ENCODE measurements at regions of chr14 and their contacts with region 1.

Region 1: GRCh38 chr14:75514673-75515628 is 7.3 kb upstream of the BATF start:
- DNase-seq: peak; percentile 59 to 70 (median 63)
- H3K4me3 ChIP-seq: peak overlapping the region; percentile 45 to 49
- H3K4me3 Mint-ChIP-seq: peak overlapping the region; percentile 88 to 97 (median 94)
- H3K27ac ChIP-seq: peak overlapping the region; percentile 73
- H3K27ac Mint-ChIP-seq: peak overlapping the region; percentile 87 to 99 (median 97)
- H3K4me1 ChIP-seq: peaks cover 33% of the 10 kb centered on the region
- H3K4me1 Mint-ChIP-seq: peaks cover 22 to 51% (median 33%) of the 10 kb centered on the region in 4 donors
- H3K27me3 ChIP-seq: no peaks in the 10 kb centered on the region
- H3K27me3 Mint-ChIP-seq: no peaks in the 10 kb centered on the region

Region 2: GRCh38 chr14:75531660-75532317 is 16.8 kb after region 1 on chr14:
- CTCF ChIA-PET with region 1: interaction called, 15 read pairs
- POLR2A ChIA-PET with region 1: interaction called, 292 read pairs
- intact Hi-C with region 1: no loop called
- DNase-seq: no peak
- H3K4me3 ChIP-seq: no peak overlapping the region
- H3K4me3 Mint-ChIP-seq: peak overlapping the region in 4 of 8 donors; percentile 33 to 64 (median 44)
- H3K27ac ChIP-seq: peak overlapping the region; percentile 40
- H3K27ac Mint-ChIP-seq: peak overlapping the region; percentile 44 to 93 (median 81)
- H3K4me1 ChIP-seq: peaks cover 72% of the 10 kb centered on the region
- H3K4me1 Mint-ChIP-seq: peaks cover 53 to 73% (median 65%) of the 10 kb centered on the region in 4 donors
- H3K27me3 ChIP-seq: no peaks in the 10 kb centered on the region
- H3K27me3 Mint-ChIP-seq: no peaks in the 10 kb centered on the region

Region 3: GRCh38 chr14:75542588-75543091 is 27.7 kb after region 1 on chr14:
- CTCF ChIA-PET with region 1: interaction called, 19 read pairs
- POLR2A ChIA-PET with region 1: interaction called, 292 read pairs
- intact Hi-C with region 1: no loop called
- DNase-seq: peak; percentile 67 to 93 (median 71)
- H3K4me3 ChIP-seq: peak overlapping the region; percentile 34 to 42
- H3K4me3 Mint-ChIP-seq: peak overlapping the region; percentile 66 to 89 (median 82)
- H3K27ac ChIP-seq: peak overlapping the region; percentile 94
- H3K27ac Mint-ChIP-seq: peak overlapping the region; percentile 96 to 99 (median 97)
- H3K4me1 ChIP-seq: peaks cover 71% of the 10 kb centered on the region
- H3K4me1 Mint-ChIP-seq: peaks cover 48 to 79% (median 67%) of the 10 kb centered on the region in 4 donors
- H3K27me3 ChIP-seq: no peaks in the 10 kb centered on the region
- H3K27me3 Mint-ChIP-seq: no peaks in the 10 kb centered on the region

Region 4: GRCh38 chr14:75552497-75552896 is 37.5 kb after region 1 on chr14:
- CTCF ChIA-PET with region 1: interaction called, 11 read pairs
- POLR2A ChIA-PET with region 1: interaction called, 292 read pairs
- intact Hi-C with region 1: no loop called
- DNase-seq: no peak
- H3K4me3 ChIP-seq: no peak overlapping the region
- H3K4me3 Mint-ChIP-seq: no peak overlapping the region
- H3K27ac ChIP-seq: no peak overlapping the region
- H3K27ac Mint-ChIP-seq: peak overlapping the region in 1 of 7 donors; percentile 31
- H3K4me1 ChIP-seq: peaks cover 22% of the 10 kb centered on the region
- H3K4me1 Mint-ChIP-seq: peaks cover 18 to 36% (median 31%) of the 10 kb centered on the region in 4 donors
- H3K27me3 ChIP-seq: no peaks in the 10 kb centered on the region
- H3K27me3 Mint-ChIP-seq: peaks cover 0 to 1% of the 10 kb centered on the region in 2 donors

Region 5: DNA sequence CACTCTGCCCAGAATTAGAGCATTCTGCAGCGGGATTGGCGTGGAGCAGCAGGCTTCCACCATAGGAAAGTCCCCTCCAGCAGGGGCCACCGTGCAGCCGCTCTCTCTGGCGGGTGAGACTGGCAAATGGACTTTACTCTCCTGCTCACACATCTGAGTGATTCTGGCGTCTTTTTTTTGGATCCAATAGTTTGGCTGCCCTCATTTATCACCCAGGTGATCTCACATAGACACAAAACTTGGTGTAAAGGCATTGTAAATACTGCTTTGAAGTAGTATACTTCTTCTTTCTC is 336.6 kb after region 1 on chr14:
- CTCF ChIA-PET with region 1: no interaction called
- POLR2A ChIA-PET with region 1: no interaction called
- intact Hi-C with region 1: no loop called
- DNase-seq: no peak
- H3K4me3 ChIP-seq: no peak overlapping the region
- H3K4me3 Mint-ChIP-seq: no peak overlapping the region
- H3K27ac ChIP-seq: no peak overlapping the region
- H3K27ac Mint-ChIP-seq: no peak overlapping the region
- H3K4me1 ChIP-seq: no peaks in the 10 kb centered on the region
- H3K4me1 Mint-ChIP-seq: no peaks in the 10 kb centered on the region
- H3K27me3 ChIP-seq: no peaks in the 10 kb centered on the region
- H3K27me3 Mint-ChIP-seq: no peaks in the 10 kb centered on the region

Region 6: DNA sequence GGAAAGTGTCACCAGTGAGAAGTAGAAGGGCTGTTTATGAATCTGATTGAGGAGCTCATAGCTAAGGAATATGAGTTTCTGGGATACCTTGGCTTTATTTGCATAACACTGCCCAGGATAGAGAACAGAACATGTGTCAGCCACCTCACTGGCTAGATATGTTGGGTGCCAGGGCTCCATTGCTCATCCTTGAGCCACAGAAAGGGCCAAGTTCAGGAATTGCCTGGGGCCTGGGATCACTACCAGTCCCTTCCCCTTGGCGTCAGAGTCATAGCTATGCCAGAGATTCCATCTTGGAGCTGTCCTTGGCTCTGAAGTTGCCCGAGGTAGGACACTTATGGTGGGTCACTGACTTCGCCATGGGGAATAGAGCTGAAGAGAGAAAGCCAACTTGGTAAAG is 519.6 kb after region 1 on chr14:
- CTCF ChIA-PET with region 1: no interaction called
- POLR2A ChIA-PET with region 1: no interaction called
- intact Hi-C with region 1: no loop called
- DNase-seq: no peak
- H3K4me3 ChIP-seq: no peak overlapping the region
- H3K4me3 Mint-ChIP-seq: no peak overlapping the region
- H3K27ac ChIP-seq: no peak overlapping the region
- H3K27ac Mint-ChIP-seq: no peak overlapping the region
- H3K4me1 ChIP-seq: no peaks in the 10 kb centered on the region
- H3K4me1 Mint-ChIP-seq: no peaks in the 10 kb centered on the region
- H3K27me3 ChIP-seq: no peaks in the 10 kb centered on the region
- H3K27me3 Mint-ChIP-seq: no peaks in the 10 kb centered on the region

Measured in CD4-positive, alpha-beta memory T cell (primary cell).